ENCODE measurements at regions of chr20 and their contacts with region 1.

Region 1: GRCh38 chr20:10453241-10453640 is 18.1 kb downstream of the SLX4IP start:
- DNase-seq: peak; percentile 87 to 96 (median 93)
- H3K4me3 ChIP-seq: peak overlapping the region in 3 of 7 experiments; percentile 12 to 58 (median 53)
- H3K27ac ChIP-seq: peak overlapping the region in 1 of 2 experiments; percentile 76
- H3K4me1 ChIP-seq: peaks cover 13 to 58% (median 28%) of the 10 kb centered on the region in 4 experiments
- H3K27me3 ChIP-seq: no peaks in the 10 kb centered on the region

Region 2: GRCh38 chr20:10249048-10249770 is 204.0 kb before region 1 on chr20:
- CTCF ChIA-PET with region 1: no interaction called
- POLR2A ChIA-PET with region 1: no interaction called
- DNase-seq: no peak
- H3K4me3 ChIP-seq: no peak overlapping the region
- H3K27ac ChIP-seq: no peak overlapping the region
- H3K4me1 ChIP-seq: peaks cover 0 to 15% (median 9%) of the 10 kb centered on the region in 4 experiments
- H3K27me3 ChIP-seq: no peaks in the 10 kb centered on the region

Region 3: GRCh38 chr20:10434467-10434831 is 18.8 kb before region 1 on chr20:
- CTCF ChIA-PET with region 1: interaction called, 8 read pairs
- POLR2A ChIA-PET with region 1: interaction called, 13 read pairs
- DNase-seq: peak; percentile 98 to 99 (median 98)
- H3K4me3 ChIP-seq: peak overlapping the region; percentile 68 to 97 (median 89)
- H3K27ac ChIP-seq: peak overlapping the region; percentile 93 to 97
- H3K4me1 ChIP-seq: peaks cover 8 to 47% (median 25%) of the 10 kb centered on the region in 4 experiments
- H3K27me3 ChIP-seq: no peaks in the 10 kb centered on the region

Region 4: DNA sequence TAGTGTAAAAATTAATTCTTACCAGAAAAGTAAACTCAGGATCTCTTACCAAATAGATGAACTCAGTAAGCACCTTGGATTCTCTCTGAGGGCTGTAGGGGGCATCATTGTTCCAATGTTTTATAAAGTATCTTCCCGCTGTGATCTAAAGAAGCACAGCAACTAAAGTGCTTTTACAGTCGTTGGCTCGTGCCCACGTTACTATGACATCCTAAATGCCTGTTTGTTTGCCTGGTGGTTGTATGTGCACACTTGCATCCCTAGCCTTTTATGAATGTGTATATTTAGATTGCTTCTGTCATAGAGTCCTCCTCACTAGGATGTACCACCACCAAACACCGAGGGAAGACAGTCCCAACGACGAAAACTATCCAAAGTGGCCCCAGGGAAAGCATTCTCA is 16.4 kb after region 1 on chr20:
- CTCF ChIA-PET with region 1: interaction called, 11 read pairs
- POLR2A ChIA-PET with region 1: no interaction called
- DNase-seq: peak; percentile 83 to 93 (median 92)
- H3K4me3 ChIP-seq: peak overlapping the region in 1 of 7 experiments; percentile 31
- H3K27ac ChIP-seq: no peak overlapping the region
- H3K4me1 ChIP-seq: peaks cover 4 to 56% (median 24%) of the 10 kb centered on the region in 4 experiments
- H3K27me3 ChIP-seq: no peaks in the 10 kb centered on the region

Measured in common myeloid progenitor, CD34-positive (primary cell).